ENCODE measurements at regions of chr14 and their contacts with region 1.

Region 1: GRCh38 chr14:50363714-50364111 is 33.0 kb downstream of the CDKL1 start:
- DNase-seq: peak; percentile 77
- ATAC-seq: peak; percentile 92
- H3K4me3 Mint-ChIP-seq: peak overlapping the region; percentile 80
- H3K27ac Mint-ChIP-seq: peak overlapping the region; percentile 96
- H3K4me1 Mint-ChIP-seq: peaks cover 38% of the 10 kb centered on the region
- H3K27me3 Mint-ChIP-seq: no peaks in the 10 kb centered on the region

Region 2: DNA sequence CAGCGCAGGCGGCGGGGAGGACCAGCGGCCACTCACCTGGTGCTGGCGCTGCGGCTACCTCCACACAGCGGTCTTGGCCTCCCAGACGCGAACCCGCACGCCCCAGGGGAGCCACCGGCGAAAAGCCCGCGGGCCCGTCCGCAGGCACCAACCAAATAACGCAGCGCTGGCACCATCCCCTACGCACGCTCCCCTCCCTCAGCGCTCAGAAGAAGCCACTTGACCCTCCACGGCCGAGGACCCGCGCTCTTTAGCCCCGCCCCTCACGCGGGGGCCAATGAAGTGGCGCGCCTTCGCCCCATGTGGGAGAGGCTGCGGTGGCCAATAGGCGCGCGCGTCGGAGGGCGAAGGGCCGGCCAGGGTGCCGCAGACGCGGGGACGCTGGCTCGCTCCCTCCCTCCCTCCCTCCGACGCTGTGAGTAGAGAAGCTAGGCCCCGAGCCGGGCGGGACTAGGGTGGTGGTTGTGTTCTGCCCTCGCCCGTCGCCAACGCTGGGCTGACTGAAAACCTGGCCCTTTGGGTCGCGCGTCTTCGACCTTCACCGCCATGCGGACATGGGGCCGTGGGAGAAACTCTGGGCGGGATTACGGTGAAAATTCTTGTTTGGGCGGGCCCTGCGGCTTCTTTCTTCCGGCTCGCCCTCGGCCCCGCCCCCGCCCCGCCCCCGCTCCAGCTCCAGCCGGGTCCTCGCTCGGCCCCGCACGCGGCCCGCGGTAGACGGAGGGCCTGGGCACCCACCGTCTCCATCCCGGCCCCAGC is 51.6 kb before region 1 on chr14 and contains the starts of genes DMAC2L and L2HGDH:
- CTCF ChIA-PET with region 1: no interaction called
- POLR2A ChIA-PET with region 1: interaction called, 25 read pairs
- DNase-seq: peak; percentile 92
- ATAC-seq: peak; percentile 94
- H3K4me3 Mint-ChIP-seq: peak within 1 kb of the TSS; percentile 95
- H3K27ac Mint-ChIP-seq: peak within 1 kb of the TSS; percentile 98
- H3K4me1 Mint-ChIP-seq: peaks cover 45% of the 10 kb centered on the region
- H3K27me3 Mint-ChIP-seq: no peaks in the 10 kb centered on the region
- total RNA-seq, gene DMAC2L: 14.9 to 18.6 TPM
- total RNA-seq, gene L2HGDH: 12.7 to 13.6 TPM

Region 3: GRCh38 chr14:50347521-50347920 is 16.2 kb before region 1 on chr14:
- CTCF ChIA-PET with region 1: interaction called, 3 read pairs
- POLR2A ChIA-PET with region 1: interaction called, 11 read pairs
- DNase-seq: no peak
- ATAC-seq: no peak
- H3K4me3 Mint-ChIP-seq: no peak overlapping the region
- H3K27ac Mint-ChIP-seq: no peak overlapping the region
- H3K4me1 Mint-ChIP-seq: peaks cover 18% of the 10 kb centered on the region
- H3K27me3 Mint-ChIP-seq: no peaks in the 10 kb centered on the region

Measured in activated CD8-positive, alpha-beta T cell treated with anti-CD3 and anti-CD28 coated beads, Interleukin-2, amount 10 ng/mL, durations not matched to agents 7 days and 5 days (primary cell).